Activated naive CD4-positive, alpha-beta T cell treated with anti-CD3 and anti-CD28 coated beads for 36 hours (primary cell): ENCODE measurements at regions of chr6 and their contacts with region 1.

Region 1: DNA sequence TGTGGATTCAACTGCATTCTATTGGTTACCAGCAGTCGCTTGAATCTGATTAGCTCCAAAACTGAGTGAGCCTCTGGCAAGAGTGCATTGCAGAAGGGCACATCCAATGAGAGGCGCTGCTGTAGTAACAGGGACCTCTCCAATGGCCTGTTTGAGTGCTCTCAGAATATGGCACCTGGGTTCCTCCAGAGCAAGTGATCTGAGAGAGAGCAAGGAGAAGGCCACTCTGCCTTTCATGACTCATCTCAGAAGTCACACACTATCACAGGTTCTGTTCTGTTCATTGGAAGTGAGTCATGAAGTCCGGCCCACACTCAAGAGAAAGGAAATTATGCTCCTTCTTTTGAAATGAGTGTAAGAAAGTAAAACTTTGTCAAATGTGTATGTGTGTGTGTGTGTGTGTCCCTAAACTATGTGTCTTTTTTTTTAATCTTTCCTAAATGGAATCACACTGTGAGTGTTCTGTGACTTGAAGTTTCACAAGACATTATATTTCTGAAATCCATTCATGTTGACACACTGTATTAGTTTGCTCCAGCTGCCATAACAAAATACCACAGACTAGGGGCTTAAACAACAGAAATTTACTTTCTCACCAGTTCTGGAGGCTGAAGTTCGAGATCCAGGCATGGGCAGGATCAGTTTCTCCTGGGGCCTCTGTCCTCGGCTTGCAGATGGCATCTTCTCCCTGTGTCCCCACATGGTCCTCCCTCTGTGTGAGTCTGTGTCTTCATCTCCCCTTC is 138.3 kb upstream of the CDYL start:
- DNase-seq: peak; percentile 67
- H3K4me3 Mint-ChIP-seq: no peak overlapping the region
- H3K27ac Mint-ChIP-seq: no peak overlapping the region
- H3K4me1 Mint-ChIP-seq: peaks cover 15% of the 10 kb centered on the region
- H3K27me3 Mint-ChIP-seq: peaks cover 29% of the 10 kb centered on the region

Region 2: DNA sequence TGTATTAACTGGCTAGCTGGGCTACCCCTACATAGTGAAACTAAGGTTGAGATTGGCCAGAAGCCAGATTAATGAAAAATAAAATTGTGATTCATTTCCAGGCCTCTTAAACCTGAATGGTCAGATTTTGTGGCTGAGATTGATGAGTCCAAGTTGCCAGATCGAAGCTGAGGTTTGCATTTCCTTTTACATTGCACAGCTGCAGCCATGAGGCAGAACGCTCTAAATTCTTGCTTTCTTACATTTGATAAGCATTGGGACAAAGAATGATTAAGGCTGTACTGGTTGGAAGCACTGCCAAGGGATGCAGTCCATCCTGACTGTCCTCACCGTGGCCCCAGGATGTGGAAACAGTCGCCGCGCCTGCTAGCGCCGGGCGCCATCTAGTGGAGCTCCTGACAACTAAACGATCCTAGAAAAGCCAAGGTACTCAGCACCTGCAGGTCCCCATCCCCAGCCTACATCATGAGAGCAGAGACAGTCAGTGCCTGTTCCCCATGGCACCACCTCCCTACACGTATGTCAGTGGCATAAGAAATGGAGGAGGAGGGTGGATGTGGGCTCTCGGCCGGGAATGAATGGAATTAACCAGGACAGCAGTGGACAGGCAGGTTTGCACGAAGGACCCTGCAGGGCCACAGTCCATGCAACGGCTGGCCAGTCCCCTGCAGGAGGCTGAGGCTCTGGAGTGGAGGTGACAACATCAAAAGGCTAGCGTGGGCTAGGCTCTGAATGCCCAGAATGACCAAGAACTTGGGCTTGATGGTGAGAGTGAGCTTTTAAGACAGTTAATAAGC is 905.3 kb before region 1 on chr6:
- CTCF ChIA-PET with region 1: no interaction called
- intact Hi-C with region 1: no loop called
- DNase-seq: peak; percentile 75
- H3K4me3 Mint-ChIP-seq: no peak overlapping the region
- H3K27ac Mint-ChIP-seq: no peak overlapping the region
- H3K4me1 Mint-ChIP-seq: peaks cover 2% of the 10 kb centered on the region
- H3K27me3 Mint-ChIP-seq: peaks cover 3% of the 10 kb centered on the region

Region 3: GRCh38 chr6:4809999-4810918 is 172.4 kb after region 1 on chr6:
- CTCF ChIA-PET with region 1: no interaction called
- intact Hi-C with region 1: loop called (anchors 10 kb)
- DNase-seq: no peak
- H3K4me3 Mint-ChIP-seq: no peak overlapping the region
- H3K27ac Mint-ChIP-seq: peak overlapping the region; percentile 20
- H3K4me1 Mint-ChIP-seq: peaks cover 66% of the 10 kb centered on the region
- H3K27me3 Mint-ChIP-seq: no peaks in the 10 kb centered on the region

Region 4: DNA sequence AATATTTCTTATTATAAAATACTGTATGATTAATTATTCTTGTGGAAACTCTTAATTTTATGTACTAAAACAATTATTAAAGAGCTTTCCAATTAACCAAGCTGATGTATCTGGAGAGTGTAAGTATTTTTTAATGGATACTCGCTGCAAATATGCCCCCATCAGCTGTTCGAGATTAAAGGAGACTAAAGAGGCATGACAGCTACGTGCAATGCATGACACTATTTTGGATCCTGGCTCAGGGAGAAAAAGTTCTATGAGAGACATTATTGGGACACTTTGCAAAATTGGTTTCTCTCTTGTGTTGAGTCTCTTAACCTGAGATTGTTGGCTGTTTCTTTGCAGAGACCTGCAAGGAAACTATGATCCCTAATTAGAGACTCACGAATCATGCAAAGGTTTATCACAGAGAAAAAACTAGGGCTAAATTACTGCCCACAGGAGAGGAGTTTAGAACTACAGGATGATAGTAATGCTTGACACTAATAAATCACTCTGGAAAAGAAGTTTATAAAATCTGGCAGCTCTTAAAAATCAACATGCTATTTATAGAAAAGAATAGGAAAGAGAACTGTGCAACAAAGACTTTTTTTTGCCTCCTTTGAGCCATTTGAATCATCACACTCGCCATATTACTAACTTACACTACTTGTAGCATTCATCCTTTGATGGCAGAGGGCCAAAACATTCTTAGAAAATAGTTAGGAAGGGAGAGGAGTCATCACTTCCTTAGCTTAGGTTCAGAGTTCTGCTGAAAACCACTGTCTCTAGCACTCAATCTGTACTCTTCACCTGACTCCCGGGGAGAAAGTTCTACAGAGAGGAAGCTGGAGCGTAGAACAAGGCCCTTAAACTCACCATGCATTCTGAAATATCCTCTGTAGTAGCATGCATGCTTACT is 1343.5 kb after region 1 on chr6:
- CTCF ChIA-PET with region 1: no interaction called
- intact Hi-C with region 1: loop called (anchors 5 kb)
- DNase-seq: peak; percentile 17
- H3K4me3 Mint-ChIP-seq: no peak overlapping the region
- H3K27ac Mint-ChIP-seq: no peak overlapping the region
- H3K4me1 Mint-ChIP-seq: peaks cover 30% of the 10 kb centered on the region
- H3K27me3 Mint-ChIP-seq: no peaks in the 10 kb centered on the region

Region 5: DNA sequence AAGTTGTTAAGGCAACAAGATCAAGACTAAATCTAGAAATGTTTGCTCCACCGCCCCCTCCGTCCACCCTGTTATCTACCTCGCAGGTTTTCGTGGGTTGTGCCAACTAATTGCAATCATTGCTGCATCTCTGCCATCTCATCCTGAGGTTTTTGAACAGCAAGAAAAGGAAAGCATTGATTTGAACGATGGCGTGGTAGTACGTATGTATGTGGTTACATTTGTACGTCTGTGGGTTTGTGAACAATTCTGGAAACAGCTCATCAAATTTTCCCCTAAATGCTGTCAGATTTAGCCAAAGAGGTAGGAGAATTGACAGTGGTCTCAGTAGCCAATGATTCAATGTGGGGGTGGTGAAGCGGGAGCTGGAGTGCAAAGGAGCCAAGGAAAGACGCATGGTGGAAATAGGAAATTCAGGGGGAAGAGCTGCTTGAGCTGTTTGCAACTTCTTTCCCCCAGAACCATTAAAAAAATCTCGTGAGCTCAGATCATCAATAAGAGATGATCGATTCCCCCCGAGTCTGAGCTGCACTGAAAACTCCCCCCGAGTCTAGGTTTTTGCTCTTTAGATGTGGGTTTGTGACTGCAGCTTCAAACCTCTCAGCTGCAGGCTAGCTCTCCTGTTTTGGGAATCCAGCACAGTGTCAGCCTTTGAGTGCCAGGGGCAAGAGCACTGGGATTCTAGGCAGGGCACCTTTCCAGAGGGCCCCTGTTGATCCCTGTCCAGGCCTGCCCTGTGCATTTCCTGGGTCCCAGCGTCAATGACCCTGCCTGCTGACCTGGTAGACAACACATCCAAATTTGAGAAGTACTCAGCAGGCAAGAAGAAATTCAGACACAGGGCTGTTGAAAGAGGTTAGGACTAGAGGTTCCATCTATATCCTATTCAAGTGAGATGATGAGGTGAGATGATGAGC is 1878.1 kb after region 1 on chr6:
- CTCF ChIA-PET with region 1: no interaction called
- intact Hi-C with region 1: loop called (anchors 5 kb)
- DNase-seq: peak; percentile 86
- H3K4me3 Mint-ChIP-seq: no peak overlapping the region
- H3K27ac Mint-ChIP-seq: peak overlapping the region; percentile 46
- H3K4me1 Mint-ChIP-seq: peaks cover 23% of the 10 kb centered on the region
- H3K27me3 Mint-ChIP-seq: peaks cover 68% of the 10 kb centered on the region